Activated T-helper 2 cell treated with anti-CD3 and anti-CD28 coated beads, Interferon-gamma antibody, Interleukin-2, Interleukin-4, amounts not matched to agents 10 μg/mL and 5 μg/mL and 100 μg/mL, durations not matched to agents 14 hours and 24 hours and 36 hours (primary cell): ENCODE measurements at regions of chr16 and their contacts with region 1.

Region 1: GRCh38 chr16:69796351-69797118 is 34.4 kb downstream of the WWP2 start:
- DNase-seq: no peak
- H3K4me3 Mint-ChIP-seq: no peak overlapping the region
- H3K27ac Mint-ChIP-seq: no peak overlapping the region
- H3K4me1 Mint-ChIP-seq: peaks cover 3% of the 10 kb centered on the region
- H3K27me3 Mint-ChIP-seq: no peaks in the 10 kb centered on the region

Region 2: DNA sequence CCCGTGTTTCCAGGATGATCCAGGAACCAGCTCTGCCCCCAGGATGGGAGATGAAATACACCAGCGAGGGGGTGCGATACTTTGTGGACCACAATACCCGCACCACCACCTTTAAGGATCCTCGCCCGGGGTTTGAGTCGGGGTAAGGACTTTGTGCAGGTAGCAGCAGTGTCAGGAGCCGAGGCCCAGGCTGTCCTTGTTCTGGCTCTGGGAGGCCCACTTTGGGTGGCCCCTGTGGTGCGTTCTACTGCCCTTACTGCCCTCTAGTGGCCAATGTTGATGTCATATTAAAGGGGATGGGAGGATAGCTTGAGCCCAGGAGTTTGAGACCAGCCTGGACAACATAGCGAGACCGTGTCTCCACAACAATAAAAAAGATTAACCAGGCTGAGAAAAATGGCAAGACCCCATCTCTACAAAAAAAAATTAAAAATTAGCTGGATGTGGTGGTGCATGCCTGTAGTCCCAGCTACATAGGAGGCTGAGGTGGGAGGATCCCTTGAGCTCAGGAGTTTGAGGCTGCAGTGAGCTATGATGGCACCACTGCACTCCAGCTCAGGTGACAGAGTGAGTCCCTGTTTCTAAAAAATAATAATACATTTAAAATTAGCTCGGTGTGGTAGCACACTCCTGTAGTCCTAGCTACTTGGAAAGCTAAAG is 133.7 kb after region 1 on chr16:
- intact Hi-C with region 1: loop called (anchors 1 kb)
- DNase-seq: peak; percentile 19
- H3K4me3 Mint-ChIP-seq: no peak overlapping the region
- H3K27ac Mint-ChIP-seq: no peak overlapping the region
- H3K4me1 Mint-ChIP-seq: no peaks in the 10 kb centered on the region
- H3K27me3 Mint-ChIP-seq: no peaks in the 10 kb centered on the region